ENCODE measurements at regions of chr1 and their contacts with region 1.

Region 1: GRCh38 chr1:224411766-224412165 is 22.8 kb downstream of the WDR26 start:
- DNase-seq: no peak
- ATAC-seq: no peak
- H3K4me3 ChIP-seq: no peak overlapping the region
- H3K27ac ChIP-seq: no peak overlapping the region
- H3K4me1 ChIP-seq: peaks cover 6% of the 10 kb centered on the region
- H3K27me3 ChIP-seq: no peaks in the 10 kb centered on the region
- CTCF ChIP-seq: no peak

Region 2: GRCh38 chr1:223189903-223190724 is 1221.7 kb before region 1 on chr1:
- intact Hi-C with region 1: loop called in 1 of 2 experiments (anchors 5 kb)
- DNase-seq: no peak
- ATAC-seq: no peak
- H3K4me3 ChIP-seq: no peak overlapping the region
- H3K27ac ChIP-seq: no peak overlapping the region
- H3K4me1 ChIP-seq: no peaks in the 10 kb centered on the region
- H3K27me3 ChIP-seq: no peaks in the 10 kb centered on the region
- CTCF ChIP-seq: no peak

Region 3: GRCh38 chr1:224300314-224300713 is 111.5 kb before region 1 on chr1:
- intact Hi-C with region 1: loop called (anchors 10 kb)
- DNase-seq: no peak
- ATAC-seq: no peak
- H3K4me3 ChIP-seq: no peak overlapping the region
- H3K27ac ChIP-seq: no peak overlapping the region
- H3K4me1 ChIP-seq: no peaks in the 10 kb centered on the region
- H3K27me3 ChIP-seq: no peaks in the 10 kb centered on the region
- CTCF ChIP-seq: no peak

Measured in psoas muscle (tissue), 8 donors.